ENCODE measurements at regions of chrX and their contacts with region 1.

Region 1: DNA sequence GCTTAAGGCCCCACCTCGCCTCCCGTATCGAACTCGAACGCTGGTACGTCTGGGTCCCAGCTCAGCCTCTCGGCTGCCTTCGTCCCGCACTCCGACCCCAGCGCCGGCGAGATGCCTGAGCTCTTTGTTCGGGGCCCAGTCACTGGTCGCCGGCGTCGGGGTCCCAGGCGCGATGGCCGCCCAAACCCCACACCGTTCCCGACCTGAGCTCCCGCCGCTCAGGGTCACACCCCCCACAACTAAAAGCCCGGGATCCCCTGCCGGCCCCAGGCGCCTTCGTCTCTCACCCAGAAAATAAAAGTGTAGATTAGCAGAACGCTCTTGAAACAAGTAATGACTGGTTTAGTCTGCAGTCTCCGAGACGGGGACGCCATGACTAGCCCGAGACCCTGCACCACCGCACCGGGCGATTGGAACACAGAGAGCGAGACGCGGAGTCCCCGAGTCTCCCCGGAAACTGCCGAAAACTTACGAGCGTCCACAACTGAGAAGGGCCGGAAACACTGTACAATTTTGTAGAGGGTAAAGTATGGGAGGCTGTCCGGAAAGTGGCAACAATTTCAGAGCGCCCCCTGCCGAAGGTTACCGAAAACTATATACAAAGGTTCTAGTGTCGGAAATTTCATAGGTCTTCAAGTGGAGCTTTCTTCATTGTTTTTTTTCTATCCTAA is at the start of gene TSPAN6:
- DNase-seq: peak; percentile 84
- H3K4me3 ChIP-seq: peak within 1 kb of the TSS; percentile 69 to 86 (median 81)
- H3K27ac ChIP-seq: peak within 1 kb of the TSS; percentile 78
- H3K4me1 ChIP-seq: peaks cover 4% of the 10 kb centered on the region
- H3K27me3 ChIP-seq: no peaks in the 10 kb centered on the region
- CTCF ChIP-seq: peak; percentile 41 to 55
- POLR2A ChIP-seq: peak; percentile 25
- total RNA-seq, gene TSPAN6: 43.1 and 44.6 TPM in 2 replicates

Region 2: GRCh38 chrX:100350704-100351489 is 285.6 kb before region 1 on chrX:
- CTCF ChIA-PET with region 1: no interaction called
- POLR2A ChIA-PET with region 1: no interaction called
- dilution Hi-C with region 1: no loop called
- intact Hi-C with region 1: no loop called
- DNase-seq: no peak
- H3K4me3 ChIP-seq: no peak overlapping the region
- H3K27ac ChIP-seq: no peak overlapping the region
- H3K4me1 ChIP-seq: no peaks in the 10 kb centered on the region
- H3K27me3 ChIP-seq: no peaks in the 10 kb centered on the region
- CTCF ChIP-seq: no peak
- POLR2A ChIP-seq: no peak

Region 3: DNA sequence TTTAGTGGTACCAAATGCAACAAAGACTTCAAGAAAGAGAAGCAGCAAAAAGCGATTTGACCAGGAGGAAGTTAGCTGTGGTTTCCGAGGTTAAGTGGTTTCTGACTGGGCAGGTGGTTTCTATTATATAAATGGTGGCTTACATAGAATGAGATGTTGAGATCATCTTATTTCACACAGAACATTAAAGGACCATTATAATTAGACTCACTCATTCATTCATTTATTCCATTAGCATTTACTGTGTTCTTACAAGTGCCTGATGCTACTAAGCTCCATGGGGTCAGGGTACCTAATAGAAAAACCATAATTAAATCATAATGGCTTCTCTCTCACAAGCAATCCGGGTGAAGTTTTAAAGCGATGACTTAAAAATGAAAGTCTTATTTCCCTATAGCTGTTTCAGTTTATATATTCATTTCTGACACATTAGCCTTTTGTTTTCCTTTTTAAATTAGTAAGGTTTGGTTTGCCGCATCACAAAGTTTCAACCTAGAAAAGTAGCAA is 10.4 kb before region 1 on chrX:
- CTCF ChIA-PET with region 1: interaction called, 11 read pairs
- POLR2A ChIA-PET with region 1: no interaction called
- dilution Hi-C with region 1: no loop called
- intact Hi-C with region 1: no loop called
- DNase-seq: no peak
- H3K4me3 ChIP-seq: no peak overlapping the region
- H3K27ac ChIP-seq: no peak overlapping the region
- H3K4me1 ChIP-seq: no peaks in the 10 kb centered on the region
- H3K27me3 ChIP-seq: no peaks in the 10 kb centered on the region
- CTCF ChIP-seq: no peak
- POLR2A ChIP-seq: no peak

Region 4: GRCh38 chrX:100649550-100650356 is 13.3 kb after region 1 on chrX:
- CTCF ChIA-PET with region 1: interaction called, 48 read pairs
- POLR2A ChIA-PET with region 1: interaction called, 6 read pairs
- dilution Hi-C with region 1: no loop called
- intact Hi-C with region 1: loop called (anchors 1 kb)
- DNase-seq: peak; percentile 93
- H3K4me3 ChIP-seq: peak overlapping the region in 1 of 3 experiments; percentile 22
- H3K27ac ChIP-seq: peak overlapping the region; percentile 99
- H3K4me1 ChIP-seq: peaks cover 75% of the 10 kb centered on the region
- H3K27me3 ChIP-seq: no peaks in the 10 kb centered on the region
- CTCF ChIP-seq: no peak
- POLR2A ChIP-seq: peak; percentile 57

Region 5: GRCh38 chrX:100695302-100695701 is 58.8 kb after region 1 on chrX:
- CTCF ChIA-PET with region 1: no interaction called
- POLR2A ChIA-PET with region 1: no interaction called
- dilution Hi-C with region 1: no loop called
- intact Hi-C with region 1: no loop called
- DNase-seq: no peak
- H3K4me3 ChIP-seq: no peak overlapping the region
- H3K27ac ChIP-seq: no peak overlapping the region
- H3K4me1 ChIP-seq: no peaks in the 10 kb centered on the region
- H3K27me3 ChIP-seq: no peaks in the 10 kb centered on the region
- CTCF ChIP-seq: no peak
- POLR2A ChIP-seq: no peak